Astrocyte of the cerebellum (primary cell): ENCODE measurements at regions of chr10 and their contacts with region 1.

Region 1: GRCh38 chr10:99711129-99711719 is 20.7 kb downstream of the COX15 start:
- DNase-seq: peak; percentile 45
- H3K4me3 ChIP-seq: no peak overlapping the region
- CTCF ChIP-seq: peak; percentile 59

Region 2: DNA sequence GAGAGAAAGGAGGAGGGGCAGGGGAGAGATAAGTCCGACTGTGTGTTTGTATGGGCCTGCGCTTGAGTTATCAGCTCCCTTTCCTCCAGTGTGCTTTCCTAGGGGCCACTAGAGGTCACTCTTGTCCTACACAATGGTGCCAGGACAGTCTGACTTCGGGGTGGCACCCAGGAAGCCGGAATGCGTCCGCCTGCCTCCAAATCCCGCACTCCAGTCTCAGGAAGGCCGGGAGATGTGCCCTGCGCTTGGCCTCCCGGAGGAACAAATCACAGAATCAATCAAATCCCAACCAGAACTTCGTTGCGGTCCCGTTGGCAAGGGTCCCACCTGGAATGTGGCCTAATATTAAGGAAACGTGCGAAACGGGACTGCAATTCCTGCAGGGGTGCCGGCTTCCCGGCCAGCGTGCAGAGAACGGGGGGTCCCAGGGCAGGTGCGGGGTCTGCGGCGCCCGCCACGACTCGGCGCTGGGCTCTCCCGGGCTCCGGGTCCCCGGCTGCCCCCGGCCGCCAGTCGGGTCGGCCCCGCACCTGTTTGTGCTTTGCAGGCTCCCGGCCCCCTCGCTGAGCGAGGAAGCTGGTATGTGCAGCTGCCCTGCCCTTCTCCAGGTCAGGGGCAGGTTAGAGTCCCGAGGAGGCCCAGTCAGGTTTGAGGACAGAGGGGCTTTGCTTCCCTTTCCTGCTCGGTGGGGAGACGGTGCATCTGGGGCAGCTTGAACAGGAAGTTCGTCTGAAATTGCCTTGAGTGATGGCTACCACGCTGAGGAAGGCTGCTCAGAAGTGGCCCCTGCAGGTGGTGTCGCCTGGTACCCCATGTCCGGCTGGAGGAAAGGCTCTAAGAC is 1243.5 kb before region 1 on chr10:
- in situ Hi-C with region 1: loop called (anchors 25 kb)
- DNase-seq: peak; percentile 70
- H3K4me3 ChIP-seq: peak overlapping the region; percentile 48
- CTCF ChIP-seq: peak; percentile 80

Region 3: GRCh38 chr10:99630439-99630838 is 80.8 kb before region 1 on chr10:
- in situ Hi-C with region 1: loop called (anchors 5 kb)
- DNase-seq: peak; percentile 16
- H3K4me3 ChIP-seq: no peak overlapping the region
- CTCF ChIP-seq: no peak

Region 4: DNA sequence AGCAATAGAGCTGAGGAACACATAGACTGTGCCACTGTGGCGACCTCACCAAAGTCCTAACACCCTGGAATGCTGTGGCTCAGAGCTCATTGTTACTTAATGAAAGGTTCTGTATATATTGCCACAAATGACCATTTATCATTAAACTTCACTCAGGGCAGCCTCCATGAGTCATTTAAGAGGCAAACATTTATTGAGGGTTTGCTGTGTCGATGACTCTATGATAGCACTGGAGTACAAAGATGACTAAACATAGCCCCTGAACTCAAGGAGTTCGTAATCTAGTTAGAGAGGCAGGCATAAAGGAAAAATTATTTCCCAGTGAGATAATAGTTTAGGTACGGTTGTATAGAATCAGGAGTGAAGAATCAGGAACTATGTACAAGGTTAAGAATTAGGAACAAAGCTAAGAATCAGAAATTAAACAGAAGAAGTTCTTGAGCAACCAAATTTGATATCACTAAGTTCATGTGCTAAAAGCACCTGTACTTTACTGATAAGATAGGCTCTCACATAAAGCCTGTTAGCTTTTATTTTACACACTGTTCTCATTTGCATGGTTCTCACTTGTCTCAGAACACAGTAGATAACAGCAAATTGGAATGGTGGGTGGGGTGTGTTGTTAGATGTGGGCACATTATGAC is 44.0 kb before region 1 on chr10:
- in situ Hi-C with region 1: loop called (anchors 5 kb)
- DNase-seq: peak; percentile 60
- H3K4me3 ChIP-seq: no peak overlapping the region
- CTCF ChIP-seq: no peak